B cell (primary cell): ENCODE measurements at regions of chr5 and their contacts with region 1.

Region 1: GRCh38 chr5:60649283-60649917 is 50.6 kb downstream of the DEPDC1B start:
- DNase-seq: peak; percentile 64
- ATAC-seq: no peak
- H3K4me3 ChIP-seq: no peak overlapping the region
- H3K4me3 Mint-ChIP-seq: no peak overlapping the region
- H3K27ac ChIP-seq: no peak overlapping the region
- H3K27ac Mint-ChIP-seq: no peak overlapping the region
- H3K4me1 ChIP-seq: no peaks in the 10 kb centered on the region
- H3K4me1 Mint-ChIP-seq: peaks cover 1% of the 10 kb centered on the region
- H3K27me3 ChIP-seq: no peaks in the 10 kb centered on the region
- H3K27me3 Mint-ChIP-seq: no peaks in the 10 kb centered on the region
- CTCF ChIP-seq: peak; percentile 77

Region 2: GRCh38 chr5:60295423-60295822 is 354.0 kb before region 1 on chr5:
- CTCF ChIA-PET with region 1: interaction called, 8 read pairs
- POLR2A ChIA-PET with region 1: interaction called, 3 read pairs
- intact Hi-C with region 1: loop called (anchors 1 kb)
- DNase-seq: peak; percentile 51
- ATAC-seq: no peak
- H3K4me3 ChIP-seq: no peak overlapping the region
- H3K4me3 Mint-ChIP-seq: no peak overlapping the region
- H3K27ac ChIP-seq: no peak overlapping the region
- H3K27ac Mint-ChIP-seq: no peak overlapping the region
- H3K4me1 ChIP-seq: no peaks in the 10 kb centered on the region
- H3K4me1 Mint-ChIP-seq: no peaks in the 10 kb centered on the region
- H3K27me3 ChIP-seq: no peaks in the 10 kb centered on the region
- H3K27me3 Mint-ChIP-seq: no peaks in the 10 kb centered on the region
- CTCF ChIP-seq: peak; percentile 41

Region 3: GRCh38 chr5:60395712-60396329 is 253.6 kb before region 1 on chr5:
- CTCF ChIA-PET with region 1: no interaction called
- POLR2A ChIA-PET with region 1: no interaction called
- intact Hi-C with region 1: loop called (anchors 10 kb)
- DNase-seq: no peak
- ATAC-seq: no peak
- H3K4me3 ChIP-seq: no peak overlapping the region
- H3K4me3 Mint-ChIP-seq: no peak overlapping the region
- H3K27ac ChIP-seq: no peak overlapping the region
- H3K27ac Mint-ChIP-seq: no peak overlapping the region
- H3K4me1 ChIP-seq: peaks cover 6 to 7% of the 10 kb centered on the region in 2 donors
- H3K4me1 Mint-ChIP-seq: peaks cover 13% of the 10 kb centered on the region
- H3K27me3 ChIP-seq: no peaks in the 10 kb centered on the region
- H3K27me3 Mint-ChIP-seq: no peaks in the 10 kb centered on the region
- CTCF ChIP-seq: no peak

Region 4: GRCh38 chr5:60633341-60633740 is 16.1 kb before region 1 on chr5:
- CTCF ChIA-PET with region 1: interaction called, 11 read pairs
- POLR2A ChIA-PET with region 1: no interaction called
- intact Hi-C with region 1: no loop called
- DNase-seq: no peak
- ATAC-seq: no peak
- H3K4me3 ChIP-seq: no peak overlapping the region
- H3K4me3 Mint-ChIP-seq: no peak overlapping the region
- H3K27ac ChIP-seq: no peak overlapping the region
- H3K27ac Mint-ChIP-seq: no peak overlapping the region
- H3K4me1 ChIP-seq: no peaks in the 10 kb centered on the region
- H3K4me1 Mint-ChIP-seq: no peaks in the 10 kb centered on the region
- H3K27me3 ChIP-seq: no peaks in the 10 kb centered on the region
- H3K27me3 Mint-ChIP-seq: no peaks in the 10 kb centered on the region
- CTCF ChIP-seq: no peak

Region 5: GRCh38 chr5:60660038-60660437 is 10.6 kb after region 1 on chr5:
- CTCF ChIA-PET with region 1: interaction called, 13 read pairs
- POLR2A ChIA-PET with region 1: no interaction called
- intact Hi-C with region 1: no loop called
- DNase-seq: no peak
- ATAC-seq: no peak
- H3K4me3 ChIP-seq: no peak overlapping the region
- H3K4me3 Mint-ChIP-seq: no peak overlapping the region
- H3K27ac ChIP-seq: no peak overlapping the region
- H3K27ac Mint-ChIP-seq: no peak overlapping the region
- H3K4me1 ChIP-seq: no peaks in the 10 kb centered on the region
- H3K4me1 Mint-ChIP-seq: no peaks in the 10 kb centered on the region
- H3K27me3 ChIP-seq: no peaks in the 10 kb centered on the region
- H3K27me3 Mint-ChIP-seq: no peaks in the 10 kb centered on the region
- CTCF ChIP-seq: no peak